AG04449 (cell line): ENCODE measurements at regions of chr2 and their contacts with region 1.

Region 1: DNA sequence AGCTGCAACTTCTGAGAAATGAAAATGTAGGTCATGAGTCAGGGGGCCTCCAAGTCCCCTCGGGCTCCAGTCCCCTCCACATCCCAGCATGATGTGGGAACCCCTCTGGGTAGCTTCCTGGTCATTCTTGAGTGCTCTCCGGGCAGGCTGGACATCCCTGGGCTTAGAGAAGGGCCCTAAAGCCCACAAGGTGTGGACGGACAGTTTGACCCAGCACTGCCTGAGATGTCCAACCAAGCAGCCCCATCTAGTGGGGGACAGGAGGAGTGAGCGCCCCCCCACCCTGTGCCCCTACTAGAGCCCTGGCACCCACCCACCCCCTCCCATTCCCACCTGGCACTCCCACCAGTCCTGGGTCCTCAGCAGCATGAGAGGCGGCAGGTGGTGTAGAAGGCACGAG is 46.0 kb downstream of the CYP27C1 start:
- DNase-seq: no peak
- H3K4me3 ChIP-seq: no peak overlapping the region
- CTCF ChIP-seq: peak; percentile 60

Region 2: GRCh38 chr2:126971481-126972278 is 202.5 kb before region 1 on chr2:
- CTCF ChIA-PET with region 1: no interaction called
- POLR2A ChIA-PET with region 1: no interaction called
- DNase-seq: no peak
- H3K4me3 ChIP-seq: peak overlapping the region; percentile 35
- CTCF ChIP-seq: peak; percentile 97

Region 3: GRCh38 chr2:127049927-127050802 is 124.0 kb before region 1 on chr2:
- CTCF ChIA-PET with region 1: interaction called, 11 read pairs
- POLR2A ChIA-PET with region 1: no interaction called
- DNase-seq: no peak
- H3K4me3 ChIP-seq: no peak overlapping the region
- CTCF ChIP-seq: peak; percentile 98

Region 4: GRCh38 chr2:127064642-127065250 is 109.4 kb before region 1 on chr2:
- CTCF ChIA-PET with region 1: interaction called, 37 read pairs
- POLR2A ChIA-PET with region 1: no interaction called
- DNase-seq: peak; percentile 79
- H3K4me3 ChIP-seq: no peak overlapping the region
- CTCF ChIP-seq: peak; percentile 27

Region 5: DNA sequence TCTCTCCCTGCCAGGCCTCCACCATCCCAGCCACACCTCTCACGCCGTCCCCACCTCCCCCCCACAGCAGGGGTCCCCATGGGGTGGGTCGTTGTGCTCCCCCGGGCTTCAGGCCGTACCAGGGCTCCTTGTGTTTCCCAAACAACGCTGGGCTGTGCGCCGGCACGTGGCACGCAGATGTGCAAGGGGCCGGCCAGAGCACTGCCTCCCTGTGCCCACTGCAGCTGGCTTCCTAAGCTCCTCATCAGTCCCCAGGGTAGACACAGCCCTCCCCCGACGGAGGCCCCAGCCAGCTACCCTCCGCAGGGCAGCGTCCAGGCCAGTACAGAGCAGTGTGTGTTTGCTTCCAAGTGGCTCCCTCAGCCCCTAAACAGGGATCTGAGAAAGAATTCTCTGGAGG is 101.2 kb before region 1 on chr2:
- CTCF ChIA-PET with region 1: interaction called, 37 read pairs
- POLR2A ChIA-PET with region 1: no interaction called
- DNase-seq: no peak
- H3K4me3 ChIP-seq: no peak overlapping the region
- CTCF ChIP-seq: no peak

Region 6: DNA sequence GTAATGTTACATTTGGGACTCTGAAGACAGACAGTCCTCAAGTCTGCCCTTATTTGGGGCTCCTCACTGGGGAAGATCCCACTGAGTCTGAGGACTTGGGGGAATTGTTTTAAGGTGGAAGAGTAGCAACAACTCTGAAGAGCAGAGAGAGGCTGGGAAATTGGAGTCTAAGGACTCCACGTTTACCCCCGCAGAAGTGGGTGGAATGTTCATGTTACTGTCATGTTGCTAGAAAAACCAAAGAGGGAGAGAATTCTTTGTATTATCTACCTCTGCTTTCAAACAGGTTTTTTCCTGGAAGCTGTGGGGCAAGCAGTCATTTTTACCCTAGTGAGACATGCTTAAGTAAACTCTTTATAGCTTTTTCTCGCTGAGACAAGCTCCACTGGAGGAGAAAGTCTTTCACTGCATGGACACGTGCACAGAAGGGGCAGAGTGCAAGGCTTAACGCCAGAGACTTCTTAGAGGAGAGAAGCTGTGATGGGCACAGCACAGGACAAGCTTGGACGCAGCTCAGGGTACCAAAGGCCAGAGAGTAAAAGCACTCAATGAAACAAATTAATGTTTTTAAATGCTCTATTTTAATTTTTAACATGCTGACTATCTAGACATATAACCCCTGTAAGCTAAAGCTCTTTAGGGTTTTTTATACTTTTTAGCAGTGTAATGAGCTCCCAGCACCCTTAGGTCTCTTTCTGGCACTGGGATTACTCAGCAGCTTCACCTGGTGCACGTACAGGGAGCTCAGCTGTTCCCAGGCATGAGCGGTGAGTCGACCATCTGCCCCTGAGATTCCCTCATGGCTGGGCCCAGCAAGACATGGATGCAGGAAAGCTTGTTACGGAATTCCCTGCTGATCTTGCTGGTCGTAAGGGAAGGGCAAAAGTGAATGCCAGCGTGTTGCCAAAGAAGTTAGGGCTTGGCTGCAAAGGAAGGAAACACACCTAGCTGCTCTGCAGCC is 12.7 kb before region 1 on chr2:
- CTCF ChIA-PET with region 1: interaction called, 39 read pairs
- POLR2A ChIA-PET with region 1: interaction called, 3 read pairs
- DNase-seq: no peak
- H3K4me3 ChIP-seq: no peak overlapping the region
- CTCF ChIP-seq: no peak

Region 7: GRCh38 chr2:127254386-127254981 is 80.3 kb after region 1 on chr2:
- CTCF ChIA-PET with region 1: no interaction called
- POLR2A ChIA-PET with region 1: no interaction called
- DNase-seq: no peak
- H3K4me3 ChIP-seq: no peak overlapping the region
- CTCF ChIP-seq: no peak